ENCODE measurements at regions of chr1 and their contacts with region 1.

Region 1: DNA sequence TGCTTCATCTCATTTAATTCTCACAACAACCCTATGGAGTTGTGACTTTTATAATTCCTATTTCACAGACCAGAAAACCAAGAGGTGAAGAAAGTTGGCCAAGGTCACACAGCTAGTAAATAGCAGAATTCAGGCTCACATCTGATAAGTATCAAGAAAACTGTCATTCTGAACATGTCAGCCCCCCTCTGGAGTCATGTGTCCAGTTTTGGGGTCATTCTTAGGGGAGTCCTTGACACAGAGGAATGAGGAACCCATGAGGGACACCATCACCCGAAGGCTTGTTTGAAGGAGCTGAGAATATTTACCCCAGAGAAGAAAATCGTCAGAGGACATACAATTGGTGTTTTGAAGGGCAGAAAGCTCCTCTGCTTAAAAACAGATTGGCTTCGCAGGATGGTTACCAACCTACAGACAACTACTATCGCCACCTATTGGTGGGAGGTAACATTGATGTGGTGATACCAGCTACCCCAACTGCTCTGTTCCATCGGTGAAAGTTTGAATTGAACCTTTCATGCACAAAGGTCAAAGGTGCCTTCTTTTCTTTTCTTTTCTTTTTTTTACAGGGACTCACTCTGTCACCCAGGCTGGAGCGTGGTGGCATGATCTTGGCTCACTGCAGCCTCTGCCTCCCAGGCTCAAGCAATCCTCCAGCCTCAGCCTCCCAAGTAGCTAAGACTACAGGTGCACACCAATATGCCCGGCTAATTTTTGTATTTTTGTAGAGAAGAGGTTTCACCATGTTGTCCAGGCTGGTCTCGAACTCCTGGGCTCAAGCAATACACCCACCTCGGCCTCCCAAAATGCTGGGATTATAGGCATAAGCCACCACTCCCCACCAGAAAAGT is 31.3 kb downstream of the NCMAP start:
- DNase-seq: no peak
- H3K4me3 ChIP-seq: no peak overlapping the region
- H3K27ac ChIP-seq: no peak overlapping the region
- H3K4me1 ChIP-seq: no peaks in the 10 kb centered on the region
- H3K27me3 ChIP-seq: no peaks in the 10 kb centered on the region; a peak in 1 of 7 replicates
- CTCF ChIP-seq: peak; percentile 10 to 91 (median 74)
- EP300 ChIP-seq: no peak
- POLR2A ChIP-seq: no peak
- RAD21 ChIP-seq: peak; percentile 72 to 76

Region 2: GRCh38 chr1:24541711-24542346 is 45.4 kb before region 1 on chr1:
- CTCF ChIA-PET with region 1: interaction called, 53 read pairs
- POLR2A ChIA-PET with region 1: no interaction called
- DNase-seq: peak in 1 of 2 experiments; percentile 76
- H3K4me3 ChIP-seq: no peak overlapping the region
- H3K27ac ChIP-seq: no peak overlapping the region
- H3K4me1 ChIP-seq: peaks cover 0 to 5% (median 0%) of the 10 kb centered on the region in 4 experiments; a peak in 1 of 7 replicates
- H3K27me3 ChIP-seq: no peaks in the 10 kb centered on the region
- CTCF ChIP-seq: peak; percentile 75 to 84 (median 78)
- EP300 ChIP-seq: no peak
- POLR2A ChIP-seq: no peak
- RAD21 ChIP-seq: peak; percentile 81 to 84

Region 3: GRCh38 chr1:24558902-24559791 is 28.0 kb before region 1 on chr1:
- CTCF ChIA-PET with region 1: interaction called, 28 read pairs
- POLR2A ChIA-PET with region 1: no interaction called
- DNase-seq: peak in 1 of 2 experiments; percentile 82
- H3K4me3 ChIP-seq: no peak overlapping the region
- H3K27ac ChIP-seq: no peak overlapping the region
- H3K4me1 ChIP-seq: peaks cover 2 to 10% (median 3%) of the 10 kb centered on the region in 4 experiments; a peak in 4 of 7 replicates
- H3K27me3 ChIP-seq: peaks cover 0 to 30% (median 20%) of the 10 kb centered on the region in 4 experiments; a peak in 5 of 7 replicates
- CTCF ChIP-seq: no peak
- EP300 ChIP-seq: no peak
- POLR2A ChIP-seq: no peak
- RAD21 ChIP-seq: no peak

Region 4: GRCh38 chr1:24575915-24576587 is 11.1 kb before region 1 on chr1:
- CTCF ChIA-PET with region 1: interaction called, 50 read pairs
- POLR2A ChIA-PET with region 1: no interaction called
- DNase-seq: no peak
- H3K4me3 ChIP-seq: no peak overlapping the region
- H3K27ac ChIP-seq: no peak overlapping the region
- H3K4me1 ChIP-seq: no peaks in the 10 kb centered on the region; a peak in 1 of 7 replicates
- H3K27me3 ChIP-seq: no peaks in the 10 kb centered on the region
- CTCF ChIP-seq: no peak
- EP300 ChIP-seq: no peak
- POLR2A ChIP-seq: no peak
- RAD21 ChIP-seq: no peak

Region 5: GRCh38 chr1:24635195-24635843 is 48.1 kb after region 1 on chr1:
- CTCF ChIA-PET with region 1: interaction called, 21 read pairs
- POLR2A ChIA-PET with region 1: interaction called, 4 read pairs
- DNase-seq: no peak
- H3K4me3 ChIP-seq: no peak overlapping the region
- H3K27ac ChIP-seq: no peak overlapping the region
- H3K4me1 ChIP-seq: peaks cover 0 to 4% (median 0%) of the 10 kb centered on the region in 4 experiments; a peak in 4 of 7 replicates
- H3K27me3 ChIP-seq: no peaks in the 10 kb centered on the region
- CTCF ChIP-seq: peak in 2 of 3 experiments; percentile 65 to 73; a peak in 3 of 4 replicates
- EP300 ChIP-seq: no peak
- POLR2A ChIP-seq: no peak
- RAD21 ChIP-seq: peak; percentile 82 to 86

Region 6: DNA sequence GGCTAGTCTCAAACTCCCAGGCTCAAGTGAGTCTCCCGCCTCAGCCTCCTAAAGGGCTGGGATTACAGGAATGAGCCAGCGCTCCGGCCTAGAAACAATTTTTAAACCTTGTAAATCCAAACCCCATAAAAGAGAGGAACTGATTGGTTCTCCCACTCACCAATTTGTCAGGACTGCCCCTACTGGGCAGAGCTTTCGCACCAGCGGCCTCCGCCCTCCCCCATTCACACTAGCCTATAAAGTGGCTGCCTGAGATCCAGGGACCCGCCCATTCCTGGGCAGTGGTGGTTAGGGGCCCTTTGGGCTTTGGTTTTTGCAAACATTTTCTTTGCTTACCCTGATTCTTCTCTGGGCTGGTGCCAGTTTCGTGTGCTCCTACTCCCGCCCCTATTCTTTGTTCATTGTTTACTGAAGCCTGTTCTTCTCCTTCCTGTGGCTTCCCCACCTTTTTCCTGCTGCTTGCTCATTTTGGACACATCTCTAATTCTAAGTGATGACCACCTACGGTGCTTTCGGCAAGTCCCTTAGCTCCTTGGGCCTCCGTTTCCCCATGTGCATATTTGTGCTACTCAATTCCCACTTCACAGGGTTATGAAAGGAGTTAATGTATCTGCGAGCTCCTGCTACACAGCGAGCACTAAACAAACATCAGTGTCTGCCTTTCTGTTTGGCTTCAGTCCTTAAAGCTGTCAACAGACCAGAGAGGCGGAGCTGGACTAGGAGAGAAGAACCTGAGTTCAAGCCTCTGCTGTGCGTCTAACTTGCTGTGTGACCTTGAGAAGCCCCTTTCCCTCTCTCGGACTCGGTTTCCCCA is 118.3 kb after region 1 on chr1:
- CTCF ChIA-PET with region 1: no interaction called
- POLR2A ChIA-PET with region 1: no interaction called
- DNase-seq: peak; percentile 61 to 82
- H3K4me3 ChIP-seq: no peak overlapping the region
- H3K27ac ChIP-seq: no peak overlapping the region
- H3K4me1 ChIP-seq: peaks cover 6 to 12% (median 9%) of the 10 kb centered on the region in 4 experiments; a peak in 5 of 7 replicates
- H3K27me3 ChIP-seq: no peaks in the 10 kb centered on the region
- CTCF ChIP-seq: no peak
- EP300 ChIP-seq: no peak
- POLR2A ChIP-seq: 0 out of 3 replicates have a peak, but pooled peaks of 1 of the 2 experiments have one; percentile 19
- RAD21 ChIP-seq: no peak

Measured in H1 (cell line).